Activated CD4-positive, alpha-beta T cell treated with anti-CD3 and anti-CD28 coated beads for 36 hours (primary cell): ENCODE measurements at regions of chr2 and their contacts with region 1.

Region 1: GRCh38 chr2:207328944-207329386 is 163.2 kb upstream of the KLF7 start:
- DNase-seq: peak; percentile 18
- ATAC-seq: peak; percentile 5
- H3K4me3 Mint-ChIP-seq: peak overlapping the region; percentile 55
- H3K27ac Mint-ChIP-seq: peak overlapping the region; percentile 88
- H3K4me1 Mint-ChIP-seq: peaks cover 62% of the 10 kb centered on the region
- H3K27me3 Mint-ChIP-seq: no peaks in the 10 kb centered on the region

Region 2: GRCh38 chr2:207317378-207317984 is 11.5 kb before region 1 on chr2:
- CTCF ChIA-PET with region 1: interaction called, 6 read pairs
- POLR2A ChIA-PET with region 1: no interaction called
- intact Hi-C with region 1: loop called (anchors 1 kb)
- DNase-seq: no peak
- ATAC-seq: peak; percentile 79
- H3K4me3 Mint-ChIP-seq: no peak overlapping the region
- H3K27ac Mint-ChIP-seq: peak overlapping the region; percentile 58
- H3K4me1 Mint-ChIP-seq: peaks cover 24% of the 10 kb centered on the region
- H3K27me3 Mint-ChIP-seq: peaks cover 4% of the 10 kb centered on the region